Tibial artery (tissue), 4 donors: ENCODE measurements at regions of chr2 and their contacts with region 1.

Region 1: GRCh38 chr2:112121682-112122254 is 16.4 kb upstream of the FBLN7 start:
- DNase-seq: no peak
- H3K4me3 ChIP-seq: no peak overlapping the region
- H3K27ac ChIP-seq: no peak overlapping the region
- H3K4me1 ChIP-seq: no peaks in the 10 kb centered on the region
- H3K27me3 ChIP-seq: no peaks in the 10 kb centered on the region
- CTCF ChIP-seq: peak; percentile 48 to 65

Region 2: DNA sequence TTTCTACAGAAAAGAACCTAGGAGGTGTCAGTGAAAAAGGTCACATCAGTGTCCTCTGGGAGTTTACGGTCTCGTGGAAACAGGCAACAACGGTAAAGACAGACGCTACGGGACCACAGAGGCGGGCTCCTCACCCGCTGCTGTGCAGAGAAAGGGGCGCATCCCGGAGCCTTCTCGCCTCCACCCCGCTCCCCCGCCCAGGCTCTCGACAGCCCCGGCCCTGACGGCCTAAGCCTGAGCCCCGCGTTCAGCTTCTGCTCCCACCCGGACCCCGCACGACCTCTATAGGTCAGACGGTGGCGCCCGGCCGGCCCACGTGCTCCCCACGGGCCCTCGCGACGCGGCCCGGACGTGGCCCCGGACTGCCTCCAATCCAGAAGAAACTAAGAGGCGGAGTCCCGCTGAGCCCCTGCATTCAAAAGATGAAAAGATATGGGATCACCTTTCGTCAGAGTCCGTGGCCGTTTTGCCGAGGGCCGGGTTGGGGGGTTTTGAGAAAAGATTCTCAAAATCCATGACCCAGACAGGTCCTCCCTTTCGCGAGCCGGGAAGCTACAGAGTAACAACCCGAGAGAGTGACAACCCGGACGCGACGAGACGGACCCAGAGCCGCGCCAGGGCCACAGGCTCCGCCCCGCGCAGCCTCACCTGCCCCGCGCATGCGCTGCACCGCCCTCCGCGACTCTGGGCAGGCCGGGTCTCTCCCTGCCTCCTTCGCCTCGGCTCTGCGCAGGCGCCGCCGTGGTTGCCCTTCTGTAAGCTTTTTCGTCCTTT is 132.9 kb after region 1 on chr2 and contains the start of gene ZC3H8:
- intact Hi-C with region 1: loop called (anchors 5 kb)
- DNase-seq: peak; percentile 89 to 96
- H3K4me3 ChIP-seq: peak within 1 kb of the TSS; percentile 62 to 68
- H3K27ac ChIP-seq: peak within 1 kb of the TSS; percentile 70
- H3K4me1 ChIP-seq: peaks cover 0 to 14% (median 9%) of the 10 kb centered on the region in 4 donors
- H3K27me3 ChIP-seq: no peaks in the 10 kb centered on the region
- CTCF ChIP-seq: no peak

Region 3: DNA sequence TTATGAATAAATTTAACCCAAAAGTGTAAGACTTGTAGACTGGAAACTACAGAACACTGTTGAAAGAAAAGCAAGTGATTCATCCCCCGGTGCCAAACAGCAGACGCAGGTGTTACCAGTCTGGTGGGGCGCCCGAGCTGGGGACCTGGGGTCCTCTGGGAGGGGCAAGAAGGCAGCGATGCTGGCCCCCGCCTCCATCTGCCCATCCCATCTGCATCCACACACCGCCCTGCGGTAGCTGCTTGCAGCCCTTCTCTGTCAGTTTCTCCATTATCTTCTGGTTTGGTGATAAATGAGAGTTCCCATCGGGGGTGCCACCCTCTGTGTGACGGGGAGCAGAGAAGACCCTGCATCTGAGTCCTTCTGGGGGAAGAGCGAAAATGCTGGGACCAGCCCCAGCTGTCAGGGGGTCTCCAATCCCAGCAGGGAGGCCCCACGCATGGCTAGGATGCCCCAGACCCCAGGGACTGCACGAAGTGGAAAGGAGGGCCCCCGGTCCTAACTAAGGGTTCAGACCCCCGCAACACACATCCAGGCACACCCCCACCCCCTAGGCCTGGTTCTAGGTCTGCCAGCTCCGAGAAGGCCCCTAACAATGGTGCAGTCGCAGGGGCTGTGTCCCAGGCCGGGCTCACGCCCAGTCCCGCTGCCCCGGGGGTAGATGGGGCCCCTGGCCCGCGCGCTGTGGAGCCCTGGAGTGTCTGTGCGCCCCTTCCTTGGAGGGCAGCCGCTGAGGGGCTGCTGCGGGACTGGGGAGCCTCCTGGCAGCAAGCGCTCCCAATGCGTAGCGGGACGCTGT is 312.4 kb after region 1 on chr2:
- intact Hi-C with region 1: loop called (anchors 10 kb)
- DNase-seq: peak in 1 of 2 donors; percentile 62
- H3K4me3 ChIP-seq: no peak overlapping the region
- H3K27ac ChIP-seq: no peak overlapping the region
- H3K4me1 ChIP-seq: peaks cover 0 to 15% (median 3%) of the 10 kb centered on the region in 4 donors
- H3K27me3 ChIP-seq: peaks cover 0 to 13% of the 10 kb centered on the region in 2 donors
- CTCF ChIP-seq: no peak